GM12878 (cell line): ENCODE measurements at regions of chr16 and their contacts with region 1.

Region 1: GRCh38 chr16:21326459-21326858 is 48.4 kb upstream of the CRYM start:
- DNase-seq: no peak
- ATAC-seq: no peak
- H3K4me3 ChIP-seq: no peak overlapping the region
- H3K27ac ChIP-seq: no peak overlapping the region
- H3K4me1 ChIP-seq: no peaks in the 10 kb centered on the region
- H3K27me3 ChIP-seq: no peaks in the 10 kb centered on the region
- CTCF ChIP-seq: no peak
- EP300 ChIP-seq: no peak
- POLR2A ChIP-seq: no peak
- RAD21 ChIP-seq: no peak

Region 2: DNA sequence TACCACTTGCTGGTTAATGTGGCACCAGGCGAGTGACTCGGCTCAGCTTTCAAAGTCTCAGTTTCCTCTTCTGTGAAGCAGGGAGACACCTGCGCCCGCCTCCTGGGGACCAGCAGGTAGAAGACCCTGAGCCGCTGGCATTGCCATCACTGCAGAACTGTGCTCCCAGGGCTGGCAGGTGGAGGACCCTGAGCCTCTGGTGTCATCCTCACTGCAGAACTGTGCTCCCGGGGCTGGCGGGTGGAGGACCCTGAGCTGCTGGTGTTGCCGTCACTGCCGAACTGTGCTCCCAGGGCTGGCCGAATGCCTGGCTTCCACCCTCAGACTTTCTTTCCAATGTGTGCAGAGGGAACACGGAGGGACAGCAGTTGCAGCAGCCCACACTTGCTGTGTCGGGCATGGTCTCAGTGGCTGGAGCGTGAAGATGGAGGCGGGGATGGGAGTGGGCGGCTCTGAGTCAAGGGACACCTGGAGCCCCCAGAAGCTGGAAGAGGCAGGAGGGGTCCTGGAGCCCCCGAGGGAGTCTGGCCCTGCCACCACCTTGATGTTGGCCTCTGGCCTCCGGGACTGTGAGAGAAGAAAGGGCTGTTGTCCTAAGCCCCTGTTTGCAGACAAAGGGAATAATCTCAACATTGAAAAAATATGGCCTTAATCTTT is 197.1 kb after region 1 on chr16:
- CTCF ChIA-PET with region 1: no interaction called
- POLR2A ChIA-PET with region 1: no interaction called
- RAD21 ChIA-PET with region 1: no interaction called
- SMC1A ChIA-PET with region 1: no interaction called
- in situ Hi-C with region 1: no loop called
- intact Hi-C with region 1: no loop called
- DNase-seq: no peak
- ATAC-seq: no peak
- H3K4me3 ChIP-seq: no peak overlapping the region
- H3K27ac ChIP-seq: no peak overlapping the region
- H3K4me1 ChIP-seq: no peaks in the 10 kb centered on the region
- H3K27me3 ChIP-seq: no peaks in the 10 kb centered on the region; a peak in 1 of 4 replicates
- CTCF ChIP-seq: no peak
- EP300 ChIP-seq: no peak
- POLR2A ChIP-seq: no peak
- RAD21 ChIP-seq: no peak

Region 3: GRCh38 chr16:22694887-22695382 is 1368.5 kb after region 1 on chr16:
- CTCF ChIA-PET with region 1: no interaction called
- POLR2A ChIA-PET with region 1: no interaction called
- RAD21 ChIA-PET with region 1: no interaction called
- SMC1A ChIA-PET with region 1: no interaction called
- in situ Hi-C with region 1: loop called (anchors 10 kb)
- intact Hi-C with region 1: no loop called
- DNase-seq: no peak
- ATAC-seq: no peak
- H3K4me3 ChIP-seq: no peak overlapping the region
- H3K27ac ChIP-seq: no peak overlapping the region
- H3K4me1 ChIP-seq: no peaks in the 10 kb centered on the region
- H3K27me3 ChIP-seq: peaks cover 1 to 4% of the 10 kb centered on the region in 2 experiments; a peak in 1 of 4 replicates
- CTCF ChIP-seq: no peak
- EP300 ChIP-seq: no peak
- POLR2A ChIP-seq: no peak
- RAD21 ChIP-seq: no peak